GM10248 (cell line): ENCODE measurements at regions of chr5 and their contacts with region 1.

Region 1: DNA sequence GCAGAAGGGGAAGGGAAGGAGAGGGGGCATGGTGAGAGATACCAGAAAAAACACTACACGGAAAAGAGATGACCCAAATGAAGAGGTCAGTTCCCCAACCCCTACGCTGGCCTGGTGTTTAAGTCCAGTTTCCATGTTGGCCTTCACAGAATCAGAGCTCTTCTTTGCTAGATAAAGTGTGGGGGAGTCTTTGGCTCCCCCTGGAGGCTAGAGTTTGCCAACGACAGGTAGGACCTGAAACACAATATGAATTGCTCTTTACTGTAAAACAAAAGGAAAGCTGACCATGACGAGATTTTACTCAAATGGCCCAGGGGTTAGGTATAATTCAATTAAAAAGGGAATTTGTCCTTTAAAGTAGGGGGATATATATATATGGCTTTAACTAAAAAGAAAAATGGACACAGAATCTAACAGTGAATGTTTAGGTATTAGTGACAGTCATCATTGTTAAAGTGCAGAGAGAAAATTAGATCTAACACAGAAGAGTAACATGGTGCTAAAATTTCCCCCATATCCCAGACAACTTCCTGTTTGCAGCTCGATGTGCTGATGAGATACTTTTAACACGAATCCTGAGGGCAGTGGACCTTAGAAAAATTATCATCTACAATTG is 92.0 kb downstream of the SV2C start:
- DNase-seq: peak; percentile 79
- CTCF ChIP-seq: peak; percentile 75

Region 2: DNA sequence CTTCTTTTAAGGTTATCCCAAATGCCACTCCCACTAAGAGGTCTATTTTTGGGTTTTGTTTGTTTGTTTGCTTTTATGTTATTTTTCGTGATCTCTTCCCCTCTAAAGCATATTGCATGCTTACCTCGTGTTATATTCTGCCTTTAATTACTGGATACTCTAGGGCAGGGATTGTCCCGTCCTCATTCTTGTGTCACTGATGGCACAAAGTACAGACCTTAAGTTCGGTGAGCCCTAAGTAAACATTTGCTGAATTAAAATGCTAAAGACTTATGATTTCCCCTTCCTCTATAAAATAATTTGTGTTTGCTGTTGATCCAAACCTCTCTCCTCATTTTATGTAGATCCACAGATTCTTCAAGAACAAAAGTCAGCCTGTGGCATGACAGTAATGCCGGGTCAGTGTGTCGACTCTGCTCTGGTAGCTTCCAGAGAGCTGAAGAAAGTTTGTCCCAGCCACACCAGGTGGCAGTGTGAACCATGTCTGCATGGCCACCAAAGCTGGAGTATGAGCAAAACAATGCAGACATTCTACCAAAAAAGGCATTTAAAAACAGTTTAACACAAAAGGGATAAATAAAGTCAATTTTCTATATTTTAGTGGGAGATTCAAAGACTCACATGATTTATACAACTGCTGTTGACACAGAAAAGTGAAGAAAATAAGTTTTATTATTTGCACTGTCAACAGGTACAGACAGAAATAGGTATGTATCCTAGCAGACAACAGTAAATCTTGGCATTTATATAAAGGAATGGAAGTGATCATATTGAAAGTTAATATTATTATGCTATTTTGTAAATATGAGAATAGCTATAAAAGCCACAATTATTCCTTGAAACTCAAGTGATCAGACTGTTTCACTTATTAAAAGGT is 440.0 kb before region 1 on chr5:
- CTCF ChIA-PET with region 1: interaction called, 29 read pairs
- POLR2A ChIA-PET with region 1: no interaction called
- DNase-seq: peak; percentile 36
- CTCF ChIP-seq: peak; percentile 63

Region 3: DNA sequence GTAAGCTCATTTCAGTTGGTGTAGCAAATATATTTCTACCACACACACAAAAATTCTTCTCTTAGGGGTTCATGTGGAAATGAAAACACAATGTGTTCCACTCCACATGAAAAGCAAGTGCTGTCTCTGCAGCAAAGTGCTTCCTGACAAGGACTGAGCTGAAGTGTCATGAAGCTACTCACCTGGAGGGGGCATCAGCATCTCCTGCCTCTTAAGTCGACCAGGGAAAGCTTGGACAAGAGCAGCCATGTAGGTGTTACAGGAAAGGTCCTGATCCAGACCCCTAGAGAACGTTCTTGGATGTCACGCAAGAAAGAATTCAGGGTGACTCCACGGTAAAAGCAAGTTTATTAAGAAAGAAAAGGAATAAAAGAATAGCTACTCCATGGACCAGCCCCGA is 29.2 kb before region 1 on chr5:
- CTCF ChIA-PET with region 1: interaction called, 21 read pairs
- POLR2A ChIA-PET with region 1: no interaction called
- DNase-seq: peak; percentile 18
- CTCF ChIP-seq: peak; percentile 24

Region 4: GRCh38 chr5:76154009-76154690 is 21.0 kb before region 1 on chr5:
- CTCF ChIA-PET with region 1: interaction called, 21 read pairs
- POLR2A ChIA-PET with region 1: no interaction called
- DNase-seq: no peak
- CTCF ChIP-seq: no peak

Region 5: GRCh38 chr5:76187386-76187785 is 12.2 kb after region 1 on chr5:
- CTCF ChIA-PET with region 1: interaction called, 15 read pairs
- POLR2A ChIA-PET with region 1: no interaction called
- DNase-seq: no peak
- CTCF ChIP-seq: no peak

Region 6: DNA sequence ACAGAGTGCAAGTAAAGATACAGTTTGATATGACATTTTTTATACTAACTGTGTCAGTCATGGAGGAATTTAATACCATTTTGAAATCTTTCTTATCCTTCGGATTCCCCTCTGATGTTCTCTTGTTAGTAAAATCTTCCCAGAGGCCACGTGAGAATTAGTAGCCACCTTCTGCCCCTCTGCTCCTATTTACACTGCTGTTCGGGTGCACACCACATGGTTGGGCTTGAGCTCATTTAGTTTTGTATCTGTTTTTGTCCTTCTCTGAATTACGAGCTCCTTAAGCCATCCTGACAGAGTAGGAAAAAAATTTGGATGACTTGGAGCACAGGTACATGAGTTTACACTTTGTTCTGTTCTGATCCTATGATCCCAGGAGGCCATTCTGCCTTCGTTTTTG is 17.7 kb after region 1 on chr5:
- CTCF ChIA-PET with region 1: interaction called, 15 read pairs
- POLR2A ChIA-PET with region 1: no interaction called
- DNase-seq: no peak
- CTCF ChIP-seq: no peak

Region 7: DNA sequence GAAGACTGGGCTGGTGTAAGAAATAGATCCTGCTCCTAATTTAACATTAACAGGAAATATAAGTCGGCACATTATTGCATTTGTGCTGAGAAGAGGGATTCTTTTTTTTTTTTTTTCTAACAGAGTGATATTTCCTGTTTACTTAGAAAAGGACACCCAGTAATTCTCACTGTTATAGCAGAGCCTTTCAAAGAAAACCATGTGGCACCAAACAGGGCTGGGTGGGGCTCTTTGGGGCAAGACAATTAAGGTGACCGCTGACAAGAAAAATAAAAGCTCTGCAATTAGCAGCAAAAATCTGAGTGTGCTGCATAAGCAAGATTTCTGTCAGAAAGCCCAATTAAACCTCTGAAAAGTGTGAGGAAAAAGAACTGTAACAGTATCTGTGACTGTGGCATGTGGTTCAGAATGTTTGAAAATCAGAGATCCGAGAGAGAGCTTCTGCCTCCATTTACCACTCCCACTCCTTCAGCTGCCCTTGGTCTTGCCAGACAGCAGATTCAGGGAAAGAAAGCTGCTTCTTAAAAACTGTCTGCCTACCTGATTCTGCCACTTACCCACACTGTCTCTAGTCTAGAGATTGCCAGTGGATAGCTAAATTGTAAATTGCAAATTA is 150.8 kb after region 1 on chr5:
- CTCF ChIA-PET with region 1: no interaction called
- POLR2A ChIA-PET with region 1: no interaction called
- DNase-seq: no peak
- CTCF ChIP-seq: no peak